ENCODE measurements at regions of chr2 and their contacts with region 1.

Region 1: GRCh38 chr2:73233154-73233931 is at the start of gene PRADC1:
- DNase-seq: peak; percentile 98 to 100
- H3K4me3 ChIP-seq: peak within 1 kb of the TSS; percentile 89
- H3K27ac ChIP-seq: peak within 1 kb of the TSS; percentile 82
- H3K4me1 ChIP-seq: peaks cover 20% of the 10 kb centered on the region
- H3K27me3 ChIP-seq: no peaks in the 10 kb centered on the region
- CTCF ChIP-seq: no peak
- total RNA-seq, gene PRADC1: 8.9 and 9.4 TPM in 2 replicates

Region 2: GRCh38 chr2:73243884-73244570 is 10.7 kb after region 1 on chr2:
- CTCF ChIA-PET with region 1: interaction called, 4 read pairs
- POLR2A ChIA-PET with region 1: no interaction called
- intact Hi-C with region 1: loop called (anchors 1 kb)
- DNase-seq: peak; percentile 86 to 96
- H3K4me3 ChIP-seq: no peak overlapping the region
- H3K27ac ChIP-seq: peak overlapping the region; percentile 31
- H3K4me1 ChIP-seq: peaks cover 16% of the 10 kb centered on the region
- H3K27me3 ChIP-seq: no peaks in the 10 kb centered on the region
- CTCF ChIP-seq: no peak

Region 3: DNA sequence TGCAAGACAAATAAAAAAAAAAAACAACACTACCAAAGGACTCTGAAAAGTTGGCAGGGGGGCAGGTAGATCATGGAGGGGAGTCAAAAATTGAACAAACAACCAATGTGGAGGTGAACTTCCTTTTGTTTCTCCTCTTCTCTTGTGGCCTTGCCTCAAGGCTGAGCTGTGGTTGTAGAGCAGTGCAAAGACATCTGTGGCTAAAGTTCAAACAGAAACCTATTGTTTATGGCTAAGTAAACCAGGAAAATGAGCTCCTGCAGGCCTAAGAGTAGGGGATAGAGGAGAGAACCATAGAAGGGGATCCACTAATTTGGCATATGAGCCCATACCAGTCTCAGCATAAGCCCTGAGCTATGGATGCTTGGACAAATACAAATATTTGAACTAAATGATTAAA is 100.2 kb after region 1 on chr2:
- CTCF ChIA-PET with region 1: no interaction called
- POLR2A ChIA-PET with region 1: no interaction called
- intact Hi-C with region 1: no loop called
- DNase-seq: no peak
- H3K4me3 ChIP-seq: no peak overlapping the region
- H3K27ac ChIP-seq: no peak overlapping the region
- H3K4me1 ChIP-seq: no peaks in the 10 kb centered on the region
- H3K27me3 ChIP-seq: no peaks in the 10 kb centered on the region; the same call in 1 of the 2 replicates
- CTCF ChIP-seq: no peak

Region 4: GRCh38 chr2:73385595-73386341 is 152.4 kb after region 1 on chr2 and contains the start of gene ALMS1:
- CTCF ChIA-PET with region 1: no interaction called
- POLR2A ChIA-PET with region 1: interaction called, 5 read pairs
- intact Hi-C with region 1: loop called (anchors 10 kb)
- DNase-seq: peak; percentile 80 to 86
- H3K4me3 ChIP-seq: peak within 1 kb of the TSS; percentile 99
- H3K27ac ChIP-seq: peak within 1 kb of the TSS; percentile 62
- H3K4me1 ChIP-seq: peaks cover 18% of the 10 kb centered on the region
- H3K27me3 ChIP-seq: peaks cover 21% of the 10 kb centered on the region
- CTCF ChIP-seq: no peak
- total RNA-seq, gene ALMS1: 14.7 and 16.7 TPM in 2 replicates

Measured in PC-9 (cell line).